ENCODE measurements at regions of chr11 and their contacts with region 1.

Region 1: DNA sequence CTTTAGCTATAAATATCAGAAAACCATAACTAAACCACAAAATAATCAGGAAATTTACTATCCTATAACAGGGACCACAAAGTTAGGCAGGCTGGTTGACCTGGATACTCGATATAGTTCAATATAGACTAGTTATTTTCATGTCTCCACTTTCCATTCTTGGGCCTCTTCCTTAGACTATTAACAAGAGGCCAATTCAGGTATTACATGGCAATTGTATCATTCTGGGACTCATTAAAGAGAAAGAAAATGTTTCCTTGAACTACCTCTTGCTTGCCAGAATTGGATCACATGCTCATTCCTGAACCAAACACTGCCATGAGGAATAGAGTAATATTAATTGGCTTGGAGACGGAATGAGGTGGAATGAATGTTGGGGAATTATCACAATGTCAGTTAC is 76.0 kb downstream of the EIF3M start:
- DNase-seq: no peak
- ATAC-seq: no peak
- H3K4me3 ChIP-seq: no peak overlapping the region
- H3K27ac ChIP-seq: no peak overlapping the region
- H3K4me1 ChIP-seq: no peaks in the 10 kb centered on the region
- H3K27me3 ChIP-seq: peaks cover 14% of the 10 kb centered on the region
- CTCF ChIP-seq: no peak

Region 2: DNA sequence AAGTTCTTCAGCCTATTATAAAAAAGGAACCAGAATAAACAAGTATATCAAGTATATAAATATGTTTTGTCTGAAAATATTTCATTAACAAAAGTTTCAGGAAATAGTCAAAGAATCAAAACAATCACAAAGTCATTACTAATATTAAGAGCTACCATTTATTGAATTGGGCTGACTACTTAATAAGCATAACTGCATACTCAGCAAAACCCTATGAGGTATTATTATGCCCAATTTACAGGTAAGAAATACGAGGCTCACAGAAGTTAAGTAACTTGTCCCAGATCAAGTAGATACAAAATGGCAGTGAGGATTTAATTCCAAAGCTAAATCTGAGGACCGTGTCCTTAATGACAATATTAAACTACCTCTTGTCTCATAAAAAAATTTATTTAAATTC is 23.9 kb before region 1 on chr11:
- CTCF ChIA-PET with region 1: interaction called, 14 read pairs
- POLR2A ChIA-PET with region 1: no interaction called
- in situ Hi-C with region 1: no loop called
- intact Hi-C with region 1: no loop called
- DNase-seq: no peak
- ATAC-seq: no peak
- H3K4me3 ChIP-seq: no peak overlapping the region
- H3K27ac ChIP-seq: no peak overlapping the region
- H3K4me1 ChIP-seq: no peaks in the 10 kb centered on the region
- H3K27me3 ChIP-seq: peaks cover 7% of the 10 kb centered on the region; the same call in 1 of the 2 replicates
- CTCF ChIP-seq: no peak

Region 3: DNA sequence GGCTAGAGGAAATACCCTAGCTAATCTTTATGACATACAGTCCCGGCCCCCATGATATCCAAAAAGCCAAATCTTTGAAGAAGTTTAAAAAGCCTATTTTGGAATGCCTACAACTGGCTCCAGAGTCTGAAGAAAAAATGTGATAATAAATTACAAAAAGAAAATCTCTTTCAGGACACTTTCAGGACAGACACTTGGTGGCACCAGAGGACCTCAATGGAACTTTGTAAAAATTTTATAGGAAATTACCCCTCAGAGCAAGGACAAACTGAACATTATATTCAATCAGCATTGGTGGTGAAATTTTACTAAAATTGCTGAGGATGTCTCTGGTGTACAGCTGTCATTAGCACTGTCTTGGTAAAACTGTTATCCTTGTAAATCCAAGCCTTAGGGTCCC is 53.8 kb after region 1 on chr11:
- CTCF ChIA-PET with region 1: no interaction called
- POLR2A ChIA-PET with region 1: no interaction called
- in situ Hi-C with region 1: no loop called
- intact Hi-C with region 1: no loop called
- DNase-seq: no peak
- ATAC-seq: peak; percentile 60; the same call in 1 of the 2 replicates
- H3K4me3 ChIP-seq: no peak overlapping the region
- H3K27ac ChIP-seq: no peak overlapping the region
- H3K4me1 ChIP-seq: no peaks in the 10 kb centered on the region
- H3K27me3 ChIP-seq: peaks cover 8% of the 10 kb centered on the region; the same call in 1 of the 2 replicates
- CTCF ChIP-seq: peak; percentile 68; the same call in 1 of the 2 replicates